Activated CD8-positive, alpha-beta T cell treated with anti-CD3 and anti-CD28 coated beads, Interleukin-2, amount 10 ng/mL, durations not matched to agents 7 days and 5 days (primary cell): ENCODE measurements at regions of chr11 and their contacts with region 1.

Region 1: DNA sequence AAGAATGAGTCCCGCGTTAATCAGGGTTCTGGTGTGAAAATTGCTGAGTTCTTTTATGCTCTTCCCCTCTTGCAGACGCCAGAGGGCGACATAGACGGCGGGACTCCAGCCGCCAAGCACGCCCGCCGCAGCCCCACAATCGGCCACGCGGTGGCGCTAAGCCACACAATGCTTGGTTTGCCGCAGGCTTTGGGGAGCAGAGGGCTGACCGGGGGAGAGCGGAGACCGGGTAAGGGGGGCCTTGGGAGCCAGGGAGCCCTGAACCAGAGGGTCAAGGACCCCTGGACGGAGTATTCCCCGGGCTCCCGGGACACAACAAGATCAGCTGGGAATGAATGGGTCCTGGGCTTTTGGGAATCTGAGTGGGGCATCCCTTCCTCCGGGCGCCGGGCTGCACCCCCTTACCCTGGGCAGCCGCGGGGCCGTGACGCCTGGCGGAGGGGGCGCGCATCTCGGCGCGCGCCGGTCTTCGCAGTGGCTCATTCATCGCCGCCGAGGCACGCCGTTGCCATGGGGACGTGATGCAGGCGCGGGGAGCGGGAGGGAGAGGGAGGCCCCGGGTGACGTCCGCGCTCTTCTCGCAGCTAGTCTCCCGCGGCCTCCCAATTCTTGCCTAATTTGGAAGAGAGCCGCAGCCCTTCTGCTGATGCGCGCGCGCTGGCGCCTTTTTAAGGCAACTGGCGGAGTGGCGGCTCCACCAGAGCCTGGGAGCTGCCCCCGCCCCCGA is 12.2 kb upstream of the NPAS4 start:
- DNase-seq: peak; percentile 93
- ATAC-seq: peak; percentile 88
- H3K4me3 Mint-ChIP-seq: peak overlapping the region; percentile 73
- H3K27ac Mint-ChIP-seq: peak overlapping the region; percentile 74
- H3K4me1 Mint-ChIP-seq: peaks cover 6% of the 10 kb centered on the region
- H3K27me3 Mint-ChIP-seq: peaks cover 13% of the 10 kb centered on the region

Region 2: GRCh38 chr11:66328307-66329144 is 80.1 kb before region 1 on chr11:
- CTCF ChIA-PET with region 1: no interaction called
- POLR2A ChIA-PET with region 1: no interaction called
- DNase-seq: peak; percentile 85
- ATAC-seq: peak; percentile 78
- H3K4me3 Mint-ChIP-seq: peak overlapping the region; percentile 4
- H3K27ac Mint-ChIP-seq: peak overlapping the region; percentile 85
- H3K4me1 Mint-ChIP-seq: peaks cover 55% of the 10 kb centered on the region
- H3K27me3 Mint-ChIP-seq: no peaks in the 10 kb centered on the region

Region 3: DNA sequence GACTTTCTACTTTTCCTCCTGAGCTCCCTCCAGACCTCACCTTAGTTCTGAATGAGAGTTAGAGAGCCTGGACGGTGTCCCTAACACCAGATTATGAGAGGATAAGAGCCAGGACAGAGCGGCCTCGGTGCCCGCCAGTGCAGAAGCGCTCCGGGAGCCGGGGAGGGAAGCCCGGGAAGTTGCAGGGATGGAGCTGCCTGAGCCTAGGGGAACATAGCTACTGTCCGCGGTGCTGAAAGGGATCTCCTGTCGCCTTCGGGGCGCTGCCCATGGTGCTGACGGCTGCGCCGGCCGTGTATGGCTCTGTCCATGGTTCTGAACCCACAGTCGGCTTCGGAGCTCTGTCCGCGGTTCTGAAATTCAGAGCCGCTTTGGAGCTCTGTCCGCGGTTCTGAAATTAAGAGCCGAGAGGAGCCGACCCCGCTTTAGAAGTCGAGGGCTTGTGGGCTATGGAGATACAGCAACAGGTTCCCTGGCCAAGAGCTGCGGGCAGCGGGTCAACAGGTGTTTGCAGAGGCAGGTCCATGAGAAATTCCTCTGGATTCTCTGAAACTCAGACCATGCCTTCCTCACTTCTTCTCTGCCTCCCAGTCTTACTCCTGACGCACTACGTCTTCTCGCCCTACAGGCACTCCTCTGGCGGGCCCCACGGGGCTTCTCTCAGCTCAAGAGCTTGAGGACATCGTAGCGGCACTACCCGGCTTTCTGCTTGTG is 13.0 kb after region 1 on chr11:
- CTCF ChIA-PET with region 1: interaction called, 27 read pairs
- POLR2A ChIA-PET with region 1: no interaction called
- DNase-seq: peak; percentile 92
- ATAC-seq: peak; percentile 72
- H3K4me3 Mint-ChIP-seq: no peak overlapping the region
- H3K27ac Mint-ChIP-seq: no peak overlapping the region
- H3K4me1 Mint-ChIP-seq: peaks cover 13% of the 10 kb centered on the region
- H3K27me3 Mint-ChIP-seq: peaks cover 19% of the 10 kb centered on the region

Region 4: DNA sequence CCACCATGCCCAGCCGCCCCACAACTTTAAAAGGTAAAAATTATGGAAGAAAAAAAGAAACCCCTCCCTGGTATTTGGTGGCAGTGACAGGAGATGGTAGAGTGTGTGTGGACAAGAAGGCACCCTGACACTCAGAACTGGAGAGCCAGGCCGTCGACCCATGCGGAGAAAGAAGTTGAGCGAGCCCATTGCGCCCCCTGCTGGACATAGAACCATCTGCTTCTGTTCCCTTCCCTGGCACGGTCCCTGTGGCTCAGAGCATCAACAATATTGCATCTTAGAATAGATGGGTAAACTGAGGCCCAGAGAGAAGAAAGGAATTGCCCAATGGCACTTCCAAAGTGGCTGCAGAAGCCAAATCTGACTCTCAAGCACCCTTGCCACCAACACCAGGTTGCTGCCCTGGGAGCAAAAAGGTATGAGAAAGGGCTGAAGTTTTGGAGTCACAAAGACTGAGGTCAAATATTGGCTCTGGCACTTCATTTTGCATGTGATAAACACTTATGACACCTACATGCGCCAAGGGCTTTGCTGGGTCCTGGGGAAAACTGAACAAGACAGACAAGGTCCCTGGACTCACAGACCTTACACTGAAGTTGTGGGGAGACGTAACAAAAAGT is 21.4 kb after region 1 on chr11:
- CTCF ChIA-PET with region 1: interaction called, 14 read pairs
- POLR2A ChIA-PET with region 1: no interaction called
- DNase-seq: peak; percentile 84
- ATAC-seq: peak; percentile 92
- H3K4me3 Mint-ChIP-seq: no peak overlapping the region
- H3K27ac Mint-ChIP-seq: no peak overlapping the region
- H3K4me1 Mint-ChIP-seq: no peaks in the 10 kb centered on the region
- H3K27me3 Mint-ChIP-seq: no peaks in the 10 kb centered on the region

Region 5: GRCh38 chr11:66509131-66509561 is 100.5 kb after region 1 on chr11:
- CTCF ChIA-PET with region 1: no interaction called
- POLR2A ChIA-PET with region 1: no interaction called
- DNase-seq: peak; percentile 21
- ATAC-seq: no peak
- H3K4me3 Mint-ChIP-seq: no peak overlapping the region
- H3K27ac Mint-ChIP-seq: peak overlapping the region; percentile 39
- H3K4me1 Mint-ChIP-seq: peaks cover 25% of the 10 kb centered on the region
- H3K27me3 Mint-ChIP-seq: no peaks in the 10 kb centered on the region

Region 6: DNA sequence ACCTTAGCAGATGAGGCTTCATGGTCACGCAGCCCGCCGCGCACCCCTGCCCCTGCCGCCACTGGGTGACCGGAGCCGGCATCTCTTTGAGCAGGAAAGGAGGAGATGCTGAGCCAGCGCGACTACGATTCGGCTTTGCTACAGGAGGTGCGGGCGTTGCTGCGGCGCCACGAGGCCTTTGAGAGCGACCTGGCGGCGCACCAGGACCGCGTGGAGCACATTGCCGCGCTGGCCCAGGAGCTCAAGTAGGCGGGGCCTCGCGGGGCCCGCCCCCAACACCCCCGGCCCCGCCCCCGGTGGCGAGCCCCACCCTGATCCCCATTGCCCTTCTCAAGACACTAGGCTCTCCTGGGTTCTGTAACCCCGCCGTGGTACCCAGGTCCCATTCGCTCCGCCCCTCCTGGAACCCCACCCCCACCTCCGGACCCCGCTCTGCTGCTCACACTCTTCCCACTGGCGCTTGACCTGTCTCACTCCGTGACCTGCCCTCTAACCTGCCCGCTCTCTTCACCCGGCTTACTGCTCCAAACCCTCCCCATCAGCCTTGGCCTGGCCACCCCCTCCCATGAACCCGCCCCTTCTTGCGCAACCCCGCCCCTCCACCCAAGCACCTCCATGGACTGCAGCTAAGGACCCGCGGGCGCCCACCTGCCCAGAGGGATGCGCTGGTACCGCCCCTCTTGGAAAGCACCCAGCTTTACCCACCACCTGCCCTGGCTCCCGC is 150.7 kb after region 1 on chr11:
- CTCF ChIA-PET with region 1: no interaction called
- POLR2A ChIA-PET with region 1: no interaction called
- DNase-seq: peak; percentile 35
- ATAC-seq: peak; percentile 61
- H3K4me3 Mint-ChIP-seq: no peak overlapping the region
- H3K27ac Mint-ChIP-seq: no peak overlapping the region
- H3K4me1 Mint-ChIP-seq: no peaks in the 10 kb centered on the region
- H3K27me3 Mint-ChIP-seq: peaks cover 3% of the 10 kb centered on the region